ENCODE measurements at regions of chr1 and their contacts with region 1.

Region 1: DNA sequence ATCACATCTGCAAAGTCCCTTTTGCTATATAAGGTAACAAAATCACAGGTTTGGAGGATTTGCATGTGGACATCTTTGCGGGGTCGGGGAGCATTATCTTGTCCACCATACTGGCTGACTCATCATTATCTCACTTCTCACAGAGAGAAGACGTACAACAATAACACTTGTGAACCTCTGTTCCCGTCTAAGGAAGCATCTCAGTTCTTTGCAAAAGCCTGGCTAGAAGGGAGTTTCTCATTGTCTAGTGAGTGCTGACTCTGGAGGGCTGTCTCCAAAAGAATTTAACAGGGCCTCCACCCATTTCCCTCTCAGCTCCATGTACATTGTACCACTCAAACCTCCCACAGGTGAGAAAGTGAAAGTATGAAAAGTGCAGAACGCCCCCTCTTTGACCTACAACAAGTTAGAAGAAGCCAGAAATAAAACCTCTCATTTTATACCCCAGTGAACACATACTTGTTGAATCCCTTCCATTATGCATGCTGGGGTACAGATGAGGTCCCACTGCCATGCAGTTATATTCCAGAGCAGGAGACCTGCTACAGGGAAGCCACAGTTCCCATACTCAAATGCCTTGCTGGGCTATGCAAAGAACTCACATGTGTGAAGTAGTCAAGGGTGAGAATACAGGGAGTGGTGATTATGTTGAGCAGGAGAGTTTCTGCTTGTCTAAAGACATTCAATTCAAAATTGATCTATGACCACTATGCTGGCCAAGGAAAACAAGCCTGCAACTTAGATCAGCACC is 121.7 kb upstream of the PRDX6 start:
- DNase-seq: peak; percentile 62
- ATAC-seq: peak; percentile 83
- H3K4me3 ChIP-seq: peak overlapping the region; percentile 53
- H3K27ac ChIP-seq: peak overlapping the region; percentile 75
- H3K4me1 ChIP-seq: peaks cover 27% of the 10 kb centered on the region
- H3K27me3 ChIP-seq: no peaks in the 10 kb centered on the region
- CTCF ChIP-seq: no peak
- EP300 ChIP-seq: peak in 1 of 2 experiments; percentile 64; a peak in 1 of 4 replicates
- POLR2A ChIP-seq: no peak
- RAD21 ChIP-seq: 0 out of 2 replicates have a peak, but pooled peaks have one; percentile 1

Region 2: GRCh38 chr1:173330149-173330951 is 25.1 kb before region 1 on chr1:
- CTCF ChIA-PET with region 1: interaction called, 3 read pairs
- POLR2A ChIA-PET with region 1: no interaction called
- RAD21 ChIA-PET with region 1: interaction called, 5 read pairs
- SMC1A ChIA-PET with region 1: interaction called, 7 read pairs
- in situ Hi-C with region 1: no loop called
- intact Hi-C with region 1: loop called (anchors 1 kb)
- DNase-seq: no peak
- ATAC-seq: peak; percentile 28
- H3K4me3 ChIP-seq: no peak overlapping the region
- H3K27ac ChIP-seq: peak overlapping the region; percentile 83
- H3K4me1 ChIP-seq: peaks cover 36% of the 10 kb centered on the region
- H3K27me3 ChIP-seq: no peaks in the 10 kb centered on the region
- CTCF ChIP-seq: no peak
- EP300 ChIP-seq: no peak
- POLR2A ChIP-seq: no peak
- RAD21 ChIP-seq: no peak

Region 3: DNA sequence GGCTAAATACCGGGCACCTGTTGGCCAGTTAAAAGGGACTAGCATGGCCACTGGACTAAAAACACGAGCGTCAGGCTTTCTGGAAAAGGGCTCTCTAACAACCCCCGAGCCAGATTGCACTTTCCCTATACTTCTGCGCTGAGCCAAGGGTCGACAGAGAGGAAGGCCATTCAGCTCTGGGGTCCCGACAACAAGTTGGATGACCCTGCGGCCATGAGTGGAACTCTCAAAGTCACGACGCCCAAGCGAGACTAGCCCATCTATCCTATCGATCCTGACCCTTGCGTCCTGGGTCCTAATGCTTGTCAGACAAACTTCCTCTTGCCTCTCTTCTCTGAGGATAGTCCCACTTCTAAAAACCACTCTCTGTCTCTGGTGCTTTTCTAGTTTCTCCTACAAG is 21.8 kb after region 1 on chr1:
- CTCF ChIA-PET with region 1: no interaction called
- POLR2A ChIA-PET with region 1: no interaction called
- RAD21 ChIA-PET with region 1: no interaction called
- SMC1A ChIA-PET with region 1: no interaction called
- in situ Hi-C with region 1: no loop called
- intact Hi-C with region 1: no loop called
- DNase-seq: no peak
- ATAC-seq: no peak
- H3K4me3 ChIP-seq: no peak overlapping the region
- H3K27ac ChIP-seq: no peak overlapping the region
- H3K4me1 ChIP-seq: no peaks in the 10 kb centered on the region
- H3K27me3 ChIP-seq: no peaks in the 10 kb centered on the region
- CTCF ChIP-seq: no peak
- EP300 ChIP-seq: no peak
- POLR2A ChIP-seq: no peak
- RAD21 ChIP-seq: no peak